HepG2 (cell line): ENCODE measurements at regions of chr11 and their contacts with region 1.

Region 1: GRCh38 chr11:116427903-116428637 is 344.7 kb downstream of the BUD13 start:
- DNase-seq: peak; percentile 95
- ATAC-seq: peak; percentile 82
- H3K4me3 ChIP-seq: peak overlapping the region; percentile 6 to 35 (median 29); a peak in 5 of 6 replicates
- H3K27ac ChIP-seq: peak overlapping the region; percentile 89
- H3K4me1 ChIP-seq: peaks cover 92% of the 10 kb centered on the region
- H3K27me3 ChIP-seq: no peaks in the 10 kb centered on the region
- CTCF ChIP-seq: peak; percentile 11; the same call in 1 of the 2 replicates
- EP300 ChIP-seq: peak; percentile 35 to 85; a peak in 2 of 4 replicates
- POLR2A ChIP-seq: peak in 1 of 2 experiments; percentile 11; a peak in 1 of 4 replicates
- RAD21 ChIP-seq: no peak

Region 2: DNA sequence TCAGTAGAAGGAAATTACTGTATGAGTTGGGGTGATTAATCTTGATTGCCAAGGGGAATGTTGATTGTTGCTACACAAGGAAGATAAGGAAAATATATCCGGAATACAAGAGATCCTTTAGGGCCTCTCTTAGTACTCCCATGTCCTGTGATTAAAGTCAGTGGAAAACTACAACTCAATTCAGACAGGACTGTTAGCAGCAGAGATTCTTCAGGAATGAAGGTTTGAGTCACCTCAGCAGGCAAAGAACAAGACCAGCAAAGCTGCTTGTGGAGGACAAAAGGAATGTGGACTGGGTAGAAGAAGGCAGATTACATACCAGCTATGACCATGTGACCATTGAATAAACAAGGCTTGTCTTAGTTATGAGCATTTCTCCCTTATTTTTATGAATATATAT is 133.4 kb before region 1 on chr11:
- CTCF ChIA-PET with region 1: no interaction called
- POLR2A ChIA-PET with region 1: no interaction called
- in situ Hi-C with region 1: no loop called
- intact Hi-C with region 1: loop called (anchors 10 kb)
- DNase-seq: peak; percentile 39
- ATAC-seq: no peak
- H3K4me3 ChIP-seq: no peak overlapping the region
- H3K27ac ChIP-seq: no peak overlapping the region
- H3K4me1 ChIP-seq: peaks cover 18% of the 10 kb centered on the region
- H3K27me3 ChIP-seq: no peaks in the 10 kb centered on the region
- CTCF ChIP-seq: no peak
- EP300 ChIP-seq: no peak
- POLR2A ChIP-seq: no peak
- RAD21 ChIP-seq: no peak

Region 3: DNA sequence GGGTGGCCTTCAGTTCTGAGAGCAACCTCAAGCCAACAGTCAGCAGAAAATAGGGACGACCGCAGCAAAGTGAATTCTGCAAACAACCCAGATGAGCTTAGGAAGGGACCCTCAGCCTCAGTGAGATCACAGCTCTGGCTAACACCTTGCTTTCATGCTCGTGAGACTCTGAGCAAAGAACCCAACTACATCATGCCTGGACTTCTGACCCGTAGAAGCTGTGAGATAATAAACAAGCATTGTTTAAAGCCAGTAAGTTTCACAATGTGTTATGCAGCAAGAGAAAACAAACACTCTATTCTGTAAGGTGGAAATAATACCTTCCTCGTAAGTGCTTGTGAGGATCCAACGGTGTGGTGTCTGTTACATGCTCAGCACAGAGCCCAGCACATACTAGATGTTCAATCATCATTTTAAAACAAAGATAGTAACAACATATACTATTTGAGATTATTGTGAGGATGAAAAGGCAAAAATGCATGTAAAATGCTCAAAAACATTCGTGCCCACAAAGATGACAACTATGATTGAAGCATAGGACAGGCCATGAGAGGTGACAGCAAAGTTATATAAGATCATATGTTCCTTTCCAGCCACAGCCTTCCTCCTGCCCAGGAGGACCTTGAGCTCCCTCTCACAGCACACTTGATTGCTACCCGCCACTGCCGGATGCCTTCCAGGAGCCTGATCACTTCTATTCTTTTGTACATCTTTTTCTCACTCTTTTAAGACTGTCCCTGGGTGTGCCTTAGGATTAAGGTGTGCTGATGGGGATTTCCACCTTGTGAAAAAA is 88.6 kb before region 1 on chr11:
- CTCF ChIA-PET with region 1: no interaction called
- POLR2A ChIA-PET with region 1: interaction called, 24 read pairs
- in situ Hi-C with region 1: no loop called
- intact Hi-C with region 1: loop called (anchors 5 kb)
- DNase-seq: peak; percentile 86
- ATAC-seq: peak; percentile 89
- H3K4me3 ChIP-seq: peak overlapping the region in 2 of 3 experiments; percentile 4 to 26; a peak in 3 of 6 replicates
- H3K27ac ChIP-seq: peak overlapping the region; percentile 67
- H3K4me1 ChIP-seq: peaks cover 53% of the 10 kb centered on the region
- H3K27me3 ChIP-seq: no peaks in the 10 kb centered on the region; a peak in 1 of 5 replicates
- CTCF ChIP-seq: no peak
- EP300 ChIP-seq: peak in 1 of 2 experiments; percentile 87; a peak in 2 of 4 replicates
- POLR2A ChIP-seq: no peak
- RAD21 ChIP-seq: no peak

Region 4: DNA sequence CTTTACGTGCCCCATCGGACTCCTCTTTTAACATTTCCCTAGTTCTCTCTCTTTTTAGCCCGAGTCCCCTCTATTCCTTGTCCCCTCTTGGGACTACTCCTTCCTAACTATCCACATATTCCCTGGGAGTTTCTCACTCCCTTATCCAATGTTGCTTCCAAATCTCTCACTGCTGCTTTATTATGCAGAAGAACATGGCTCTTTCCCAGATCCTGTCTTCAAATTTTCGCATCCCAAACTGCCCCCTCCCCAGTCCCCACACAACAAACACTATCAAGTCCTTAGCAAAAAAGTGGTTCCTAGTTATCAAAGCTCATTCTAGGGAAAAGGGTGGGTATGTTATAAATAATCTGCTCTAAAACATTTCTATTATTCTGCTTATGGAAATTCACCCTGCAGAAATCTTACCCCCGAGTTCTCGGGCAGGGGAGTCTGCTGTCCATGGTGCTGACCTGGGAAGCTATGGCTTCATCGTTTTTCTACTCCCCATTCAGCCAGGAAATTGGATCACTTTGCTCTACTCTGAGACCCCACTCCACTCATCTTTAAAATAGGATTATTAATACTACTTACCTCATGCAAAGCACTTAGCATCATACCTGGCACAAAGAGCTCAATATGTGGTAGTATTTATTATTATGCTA is 48.8 kb before region 1 on chr11:
- CTCF ChIA-PET with region 1: no interaction called
- POLR2A ChIA-PET with region 1: no interaction called
- in situ Hi-C with region 1: no loop called
- intact Hi-C with region 1: loop called (anchors 5 kb)
- DNase-seq: peak; percentile 21
- ATAC-seq: no peak
- H3K4me3 ChIP-seq: no peak overlapping the region
- H3K27ac ChIP-seq: no peak overlapping the region
- H3K4me1 ChIP-seq: peaks cover 32% of the 10 kb centered on the region
- H3K27me3 ChIP-seq: no peaks in the 10 kb centered on the region
- CTCF ChIP-seq: no peak
- EP300 ChIP-seq: no peak
- POLR2A ChIP-seq: no peak
- RAD21 ChIP-seq: no peak

Region 5: GRCh38 chr11:116415095-116415494 is 13.0 kb before region 1 on chr11:
- CTCF ChIA-PET with region 1: no interaction called
- POLR2A ChIA-PET with region 1: interaction called, 117 read pairs
- in situ Hi-C with region 1: no loop called
- intact Hi-C with region 1: loop called (anchors 1 kb)
- DNase-seq: no peak
- ATAC-seq: no peak
- H3K4me3 ChIP-seq: no peak overlapping the region
- H3K27ac ChIP-seq: no peak overlapping the region
- H3K4me1 ChIP-seq: peaks cover 76% of the 10 kb centered on the region
- H3K27me3 ChIP-seq: no peaks in the 10 kb centered on the region
- CTCF ChIP-seq: no peak
- EP300 ChIP-seq: no peak
- POLR2A ChIP-seq: no peak
- RAD21 ChIP-seq: no peak

Region 6: DNA sequence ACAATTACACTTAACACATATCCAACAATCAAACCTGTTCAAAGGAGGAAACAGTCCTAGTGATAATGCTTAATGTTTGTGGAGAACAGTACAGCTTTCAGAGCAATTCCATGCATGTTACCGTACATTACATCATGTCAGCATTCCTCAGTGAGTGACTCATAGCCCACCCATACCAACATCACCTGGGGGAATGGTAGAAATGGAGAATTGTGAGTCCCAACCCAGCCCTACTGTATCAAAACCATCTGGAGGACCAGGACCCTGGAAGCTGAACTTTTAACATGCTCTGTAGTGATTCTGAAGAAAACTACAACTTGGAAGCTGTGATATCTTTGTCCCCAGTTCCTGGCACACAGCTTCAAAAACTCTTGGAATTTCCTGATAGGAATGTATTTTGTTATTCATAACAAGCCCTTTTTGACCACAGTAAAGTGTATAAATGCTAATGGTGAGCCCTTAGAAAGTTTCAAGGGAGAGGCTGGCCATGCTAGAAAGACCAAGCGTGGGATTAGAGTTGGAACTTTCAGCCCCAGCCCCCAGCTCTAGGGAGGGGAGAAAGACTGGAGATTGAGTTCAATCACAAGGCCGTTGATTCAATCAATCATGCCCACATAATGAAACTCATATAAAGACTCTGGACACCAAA is 43.7 kb after region 1 on chr11:
- CTCF ChIA-PET with region 1: no interaction called
- POLR2A ChIA-PET with region 1: interaction called, 10 read pairs
- in situ Hi-C with region 1: no loop called
- intact Hi-C with region 1: no loop called
- DNase-seq: peak; percentile 28
- ATAC-seq: no peak
- H3K4me3 ChIP-seq: no peak overlapping the region
- H3K27ac ChIP-seq: no peak overlapping the region
- H3K4me1 ChIP-seq: no peaks in the 10 kb centered on the region
- H3K27me3 ChIP-seq: no peaks in the 10 kb centered on the region
- CTCF ChIP-seq: no peak
- EP300 ChIP-seq: no peak; a peak in 1 of 4 replicates
- POLR2A ChIP-seq: no peak
- RAD21 ChIP-seq: no peak

Region 7: DNA sequence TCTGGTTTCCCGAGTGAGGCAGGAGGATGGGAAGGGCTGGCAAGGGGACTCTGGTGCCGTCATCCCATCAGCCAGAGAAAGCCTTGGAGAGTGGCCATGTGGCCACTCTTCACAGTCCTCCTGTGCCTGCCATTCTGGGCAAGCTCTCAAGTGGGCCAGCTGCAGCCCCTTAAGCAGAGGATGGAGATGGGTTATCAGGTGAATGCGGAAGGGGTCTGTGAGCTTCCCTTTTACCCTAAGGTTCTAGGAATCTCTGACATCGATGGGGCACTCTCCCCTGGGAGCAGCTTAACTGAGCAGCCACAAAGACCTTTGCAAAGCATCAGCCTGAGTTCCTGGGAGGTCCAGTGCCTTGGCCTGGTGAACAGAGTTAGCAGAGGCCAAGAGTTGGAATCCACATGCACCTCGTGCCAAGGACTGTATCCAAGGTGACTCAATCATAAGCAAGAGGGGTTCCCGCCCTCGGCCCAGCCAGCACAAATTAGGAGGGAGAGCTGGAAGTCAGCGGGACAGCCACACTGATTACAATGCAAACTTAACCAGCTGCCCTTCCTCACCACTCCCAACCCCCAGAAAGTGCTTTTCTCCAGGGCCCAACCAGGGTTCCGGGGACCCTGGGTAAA is 151.1 kb after region 1 on chr11:
- CTCF ChIA-PET with region 1: no interaction called
- POLR2A ChIA-PET with region 1: no interaction called
- in situ Hi-C with region 1: no loop called
- intact Hi-C with region 1: no loop called
- DNase-seq: peak; percentile 23
- ATAC-seq: no peak
- H3K4me3 ChIP-seq: no peak overlapping the region
- H3K27ac ChIP-seq: no peak overlapping the region
- H3K4me1 ChIP-seq: peaks cover 7% of the 10 kb centered on the region; the same call in 1 of the 2 replicates
- H3K27me3 ChIP-seq: peaks cover 0 to 11% of the 10 kb centered on the region in 2 experiments; a peak in 1 of 5 replicates
- CTCF ChIP-seq: no peak
- EP300 ChIP-seq: no peak
- POLR2A ChIP-seq: no peak
- RAD21 ChIP-seq: no peak

Region 8: DNA sequence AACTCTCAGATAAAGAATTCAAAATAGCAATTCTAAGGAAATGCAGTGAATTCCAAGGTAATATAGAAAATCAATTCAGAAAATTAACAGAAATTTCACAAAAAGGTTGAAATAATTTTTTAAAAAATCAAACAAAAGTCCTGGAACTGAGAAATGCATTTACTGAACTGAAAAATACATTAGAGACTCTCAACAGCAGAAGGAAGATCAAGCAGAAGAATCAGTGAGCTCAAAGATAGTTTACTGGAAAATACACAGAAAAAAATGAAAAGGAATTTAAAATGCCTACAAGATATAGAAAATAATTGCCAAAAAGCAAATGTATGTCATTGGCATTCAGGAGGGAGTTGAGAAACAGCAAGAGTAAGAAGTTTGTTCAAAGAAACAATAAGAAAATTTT is 237.5 kb after region 1 on chr11:
- CTCF ChIA-PET with region 1: no interaction called
- POLR2A ChIA-PET with region 1: interaction called, 10 read pairs
- in situ Hi-C with region 1: no loop called
- intact Hi-C with region 1: no loop called
- DNase-seq: no peak
- ATAC-seq: no peak
- H3K4me3 ChIP-seq: no peak overlapping the region
- H3K27ac ChIP-seq: no peak overlapping the region
- H3K4me1 ChIP-seq: peaks cover 63% of the 10 kb centered on the region
- H3K27me3 ChIP-seq: no peaks in the 10 kb centered on the region
- CTCF ChIP-seq: no peak
- EP300 ChIP-seq: no peak
- POLR2A ChIP-seq: no peak
- RAD21 ChIP-seq: no peak